Caco-2 (cell line): ENCODE measurements at regions of chr11 and their contacts with region 1.

Region 1: DNA sequence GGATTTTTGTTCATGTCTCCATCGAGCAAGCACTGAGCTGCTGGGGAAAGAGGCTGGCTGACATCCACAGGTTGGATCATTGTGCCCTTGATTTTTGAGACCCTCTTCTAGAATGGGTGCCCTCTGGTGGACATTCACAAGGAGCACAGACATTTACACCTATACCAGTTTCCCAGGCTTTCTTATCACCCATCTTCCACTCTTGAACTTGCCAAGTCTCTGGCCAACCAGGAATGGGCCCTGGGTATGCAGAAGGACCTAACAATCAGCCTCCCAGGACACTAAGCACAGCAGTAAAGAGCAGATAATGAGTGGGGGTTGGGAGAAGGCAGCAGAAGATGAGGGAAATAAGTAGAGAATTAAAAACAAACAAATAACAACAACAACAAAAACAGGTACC is 5.7 kb upstream of the INTS4 start:
- DNase-seq: peak; percentile 77 to 80
- H3K4me3 ChIP-seq: no peak overlapping the region
- H3K4me3 Mint-ChIP-seq: no peak overlapping the region
- H3K27ac Mint-ChIP-seq: no peak overlapping the region
- H3K4me1 ChIP-seq: peaks cover 10% of the 10 kb centered on the region
- H3K4me1 Mint-ChIP-seq: no peaks in the 10 kb centered on the region
- H3K27me3 ChIP-seq: no peaks in the 10 kb centered on the region
- H3K27me3 Mint-ChIP-seq: no peaks in the 10 kb centered on the region
- CTCF ChIP-seq: peak; percentile 89 to 91

Region 2: GRCh38 chr11:77879218-77879617 is 121.0 kb before region 1 on chr11:
- CTCF ChIA-PET with region 1: no interaction called
- POLR2A ChIA-PET with region 1: no interaction called
- intact Hi-C with region 1: loop called (anchors 5 kb)
- DNase-seq: no peak
- H3K4me3 ChIP-seq: no peak overlapping the region
- H3K4me3 Mint-ChIP-seq: no peak overlapping the region
- H3K27ac Mint-ChIP-seq: no peak overlapping the region
- H3K4me1 ChIP-seq: no peaks in the 10 kb centered on the region
- H3K4me1 Mint-ChIP-seq: no peaks in the 10 kb centered on the region
- H3K27me3 ChIP-seq: no peaks in the 10 kb centered on the region
- H3K27me3 Mint-ChIP-seq: no peaks in the 10 kb centered on the region
- CTCF ChIP-seq: no peak

Region 3: DNA sequence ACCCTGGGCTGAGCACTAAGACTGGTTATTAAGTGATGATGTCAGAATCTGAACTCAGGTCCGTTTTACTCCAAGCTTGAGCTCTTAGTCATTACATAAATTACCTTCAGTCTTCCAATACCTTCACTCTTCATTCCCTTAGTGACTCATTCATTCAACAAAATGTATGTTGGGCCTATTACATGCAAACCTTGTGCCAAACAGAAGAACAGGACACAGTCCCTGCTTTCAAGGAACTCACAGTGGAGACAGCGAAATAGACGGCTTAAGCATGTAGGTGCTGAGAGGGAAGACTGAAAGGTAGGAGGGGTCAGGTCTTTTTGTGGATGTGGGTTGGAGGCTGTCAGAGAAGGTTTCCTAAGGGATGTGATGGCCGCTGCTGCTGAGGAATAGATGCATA is 19.6 kb after region 1 on chr11:
- CTCF ChIA-PET with region 1: interaction called, 9 read pairs
- POLR2A ChIA-PET with region 1: interaction called, 6 read pairs
- intact Hi-C with region 1: loop called (anchors 1 kb)
- DNase-seq: no peak
- H3K4me3 ChIP-seq: no peak overlapping the region
- H3K4me3 Mint-ChIP-seq: no peak overlapping the region
- H3K27ac Mint-ChIP-seq: peak overlapping the region; percentile 6
- H3K4me1 ChIP-seq: peaks cover 20% of the 10 kb centered on the region; the same call in 1 of the 2 replicates
- H3K4me1 Mint-ChIP-seq: peaks cover 14% of the 10 kb centered on the region
- H3K27me3 ChIP-seq: no peaks in the 10 kb centered on the region
- H3K27me3 Mint-ChIP-seq: no peaks in the 10 kb centered on the region
- CTCF ChIP-seq: no peak

Region 4: GRCh38 chr11:78097666-78098385 is 97.6 kb after region 1 on chr11:
- CTCF ChIA-PET with region 1: no interaction called
- POLR2A ChIA-PET with region 1: no interaction called
- intact Hi-C with region 1: no loop called
- DNase-seq: no peak
- H3K4me3 ChIP-seq: no peak overlapping the region
- H3K4me3 Mint-ChIP-seq: no peak overlapping the region
- H3K27ac Mint-ChIP-seq: no peak overlapping the region
- H3K4me1 ChIP-seq: peaks cover 6% of the 10 kb centered on the region; the same call in 1 of the 2 replicates
- H3K4me1 Mint-ChIP-seq: peaks cover 25% of the 10 kb centered on the region
- H3K27me3 ChIP-seq: no peaks in the 10 kb centered on the region
- H3K27me3 Mint-ChIP-seq: no peaks in the 10 kb centered on the region
- CTCF ChIP-seq: no peak